Heart left ventricle (tissue), 16 donors: ENCODE measurements at regions of chr7 and their contacts with region 1.

Region 1: DNA sequence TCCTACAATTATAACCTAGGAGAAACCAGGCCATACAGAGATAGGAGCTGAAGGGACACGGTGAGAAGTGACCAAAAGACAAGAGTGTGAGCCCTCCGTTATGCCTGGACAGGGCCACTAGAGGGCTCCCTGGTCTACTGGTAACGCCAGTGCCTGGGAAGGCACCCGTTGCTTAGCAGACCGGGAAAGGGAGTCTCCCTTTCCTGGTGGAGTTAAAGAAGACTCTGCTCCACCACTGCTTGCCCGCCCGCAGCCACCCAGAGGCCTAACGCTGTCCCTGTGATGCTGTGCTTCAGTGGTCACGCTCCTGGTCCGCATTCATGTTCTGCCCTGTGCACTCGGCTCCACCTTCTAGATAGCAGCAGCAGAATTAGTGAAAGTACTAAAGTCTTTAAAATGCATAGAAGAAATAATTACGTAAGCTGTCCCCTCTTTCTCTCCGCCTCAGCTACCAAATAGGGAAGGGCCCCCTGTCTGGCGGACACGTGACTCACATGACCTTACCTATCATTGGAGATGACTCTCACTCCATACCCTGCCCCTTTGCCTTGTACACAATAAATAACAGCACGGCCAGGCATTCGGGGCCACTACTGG is 34.8 kb downstream of the GRID2IP start:
- DNase-seq: peak; percentile 81 to 91 (median 86)
- ATAC-seq: peak; percentile 81 to 91 (median 84)
- H3K4me3 ChIP-seq: peak overlapping the region in 9 of 12 donors; percentile 16 to 47 (median 30)
- H3K27ac ChIP-seq: peak overlapping the region in 1 of 12 donors; percentile 47
- H3K4me1 ChIP-seq: peaks cover 0 to 6% (median 4%) of the 10 kb centered on the region in 12 donors
- H3K27me3 ChIP-seq: peaks cover 0 to 4% (median 0%) of the 10 kb centered on the region in 9 donors
- CTCF ChIP-seq: peak; percentile 73 to 95 (median 86)
- POLR2A ChIP-seq: no peak

Region 2: DNA sequence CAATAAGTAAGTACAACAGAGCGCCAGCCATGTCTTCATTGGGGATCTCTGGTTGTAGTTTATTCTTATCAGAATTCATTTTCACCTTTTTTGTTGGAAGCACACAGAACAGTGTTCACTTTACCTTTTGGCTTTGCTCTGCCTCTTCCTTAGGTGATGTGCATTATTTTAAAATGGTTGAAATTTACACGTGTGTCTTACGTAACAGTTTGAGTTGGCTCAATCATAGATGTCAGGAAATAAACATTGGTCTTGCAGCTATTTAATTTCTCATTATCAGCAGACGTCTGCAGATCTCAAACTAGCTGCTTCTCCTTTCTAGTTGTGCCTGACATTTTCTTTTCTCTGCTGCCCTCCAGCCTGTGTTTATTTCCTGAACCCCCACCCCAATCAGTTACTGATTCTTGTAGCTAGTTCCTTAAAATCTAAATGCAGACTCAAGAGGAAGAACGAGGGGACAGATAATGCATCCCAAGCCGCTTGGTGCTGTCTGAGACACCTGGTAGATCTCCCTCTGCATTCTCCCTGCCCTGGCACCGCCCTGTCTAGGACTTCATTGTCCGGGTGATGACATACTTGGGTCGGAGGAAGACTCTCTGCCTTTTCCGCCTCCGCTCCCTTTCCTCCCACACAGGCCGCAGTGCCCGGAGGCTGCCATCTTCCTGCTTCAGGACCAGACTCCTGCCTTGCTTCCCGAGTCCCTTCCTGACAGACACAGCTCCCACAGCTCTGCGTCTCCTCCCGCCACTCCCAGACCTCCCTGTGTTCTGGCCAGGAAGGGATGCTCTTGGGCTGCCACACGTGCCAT is 377.1 kb before region 1 on chr7:
- intact Hi-C with region 1: no loop called
- DNase-seq: no peak
- ATAC-seq: peak in 3 of 4 donors; percentile 31 to 61 (median 39)
- H3K4me3 ChIP-seq: no peak overlapping the region
- H3K27ac ChIP-seq: peak overlapping the region in 1 of 12 donors; percentile 18
- H3K4me1 ChIP-seq: peaks cover 0 to 10% (median 0%) of the 10 kb centered on the region in 12 donors
- H3K27me3 ChIP-seq: no peaks in the 10 kb centered on the region
- CTCF ChIP-seq: no peak
- POLR2A ChIP-seq: no peak

Region 3: DNA sequence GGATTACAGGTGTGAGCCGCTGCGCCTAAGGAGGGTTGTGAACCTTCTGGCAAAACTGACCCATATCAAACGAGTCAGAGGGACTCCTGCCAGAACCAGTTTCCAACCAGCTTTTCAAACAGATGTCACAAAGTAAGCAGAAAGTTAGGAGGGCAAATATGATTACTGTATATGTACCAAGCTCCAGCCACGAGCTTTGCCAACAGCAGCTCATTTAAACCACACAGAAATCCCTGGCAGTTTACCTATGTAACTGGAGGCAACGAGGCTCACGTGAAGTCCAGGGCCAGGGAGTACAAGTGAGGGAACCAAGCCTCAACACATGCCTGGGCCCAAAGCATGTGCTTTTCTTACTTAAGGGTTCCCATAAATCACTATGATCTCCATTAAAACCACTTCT is 56.2 kb before region 1 on chr7:
- intact Hi-C with region 1: no loop called
- DNase-seq: no peak
- ATAC-seq: peak in 1 of 4 donors; percentile 23
- H3K4me3 ChIP-seq: no peak overlapping the region
- H3K27ac ChIP-seq: no peak overlapping the region
- H3K4me1 ChIP-seq: no peaks in the 10 kb centered on the region
- H3K27me3 ChIP-seq: no peaks in the 10 kb centered on the region
- CTCF ChIP-seq: no peak
- POLR2A ChIP-seq: no peak

Region 4: GRCh38 chr7:6589829-6590644 is 73.6 kb after region 1 on chr7 and contains the start of gene INTS15:
- intact Hi-C with region 1: loop called in 1 of 10 experiments (anchors 10 kb)
- DNase-seq: peak; percentile 74 to 88 (median 84)
- ATAC-seq: peak; percentile 71 to 96 (median 94)
- H3K4me3 ChIP-seq: peak within 1 kb of the TSS; percentile 68 to 96 (median 92)
- H3K27ac ChIP-seq: peak within 1 kb of the TSS; percentile 65 to 95 (median 91)
- H3K4me1 ChIP-seq: peaks cover 0 to 25% (median 15%) of the 10 kb centered on the region in 12 donors
- H3K27me3 ChIP-seq: no peaks in the 10 kb centered on the region
- CTCF ChIP-seq: peak; percentile 38 to 99 (median 81)
- POLR2A ChIP-seq: peak in 1 of 2 donors; percentile 57
- total RNA-seq, gene INTS15: 11.7 to 22.7 (median 15.3) TPM

Region 5: GRCh38 chr7:6934986-6935385 is 418.5 kb after region 1 on chr7:
- intact Hi-C with region 1: loop called in 1 of 10 experiments (anchors 5 kb)
- DNase-seq: no peak
- ATAC-seq: no peak
- H3K4me3 ChIP-seq: no peak overlapping the region
- H3K27ac ChIP-seq: no peak overlapping the region
- H3K4me1 ChIP-seq: no peaks in the 10 kb centered on the region
- H3K27me3 ChIP-seq: no peaks in the 10 kb centered on the region
- CTCF ChIP-seq: no peak
- POLR2A ChIP-seq: no peak